ENCODE measurements at regions of chr6 and their contacts with region 1.

Region 1: DNA sequence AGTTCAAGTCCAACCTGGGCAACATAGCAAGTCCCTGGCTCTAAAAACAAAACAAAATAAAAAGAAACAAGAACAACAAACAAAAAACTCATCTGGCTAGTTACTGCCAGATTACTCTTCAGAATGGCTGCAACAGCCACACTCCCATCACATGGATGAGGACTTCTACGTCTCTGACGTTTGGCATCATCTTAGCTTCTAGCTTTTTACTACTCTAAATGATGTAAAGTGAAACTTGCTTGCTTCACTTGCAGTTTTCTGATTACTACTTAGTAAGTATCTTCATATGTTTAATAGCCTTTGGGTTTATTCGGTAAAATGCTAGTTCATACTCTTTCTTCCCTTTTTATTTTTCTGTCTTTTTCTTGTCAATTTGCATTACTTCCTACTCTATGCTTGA is 161.1 kb upstream of the CARMIL1 start:
- DNase-seq: no peak
- H3K4me3 Mint-ChIP-seq: no peak overlapping the region
- H3K27ac Mint-ChIP-seq: peak overlapping the region; percentile 78
- H3K4me1 Mint-ChIP-seq: peaks cover 53% of the 10 kb centered on the region
- H3K27me3 Mint-ChIP-seq: no peaks in the 10 kb centered on the region

Region 2: GRCh38 chr6:25173951-25174474 is 56.0 kb after region 1 on chr6:
- intact Hi-C with region 1: loop called (anchors 2 kb)
- DNase-seq: no peak
- H3K4me3 Mint-ChIP-seq: no peak overlapping the region
- H3K27ac Mint-ChIP-seq: peak overlapping the region; percentile 70
- H3K4me1 Mint-ChIP-seq: peaks cover 82% of the 10 kb centered on the region
- H3K27me3 Mint-ChIP-seq: no peaks in the 10 kb centered on the region

Measured in activated T-helper 2 cell treated with anti-CD3 and anti-CD28 coated beads, Interferon-gamma antibody, Interleukin-2, Interleukin-4, amounts not matched to agents 10 μg/mL and 5 μg/mL and 100 μg/mL, durations not matched to agents 14 hours and 24 hours and 36 hours (primary cell).